ENCODE measurements at regions of chr16 and their contacts with region 1.

Region 1: GRCh38 chr16:76278980-76279379 is 1.8 kb downstream of the CNTNAP4 start:
- DNase-seq: peak; percentile 21
- H3K4me3 ChIP-seq: no peak overlapping the region; a peak in 1 of 4 replicates
- H3K27ac ChIP-seq: no peak overlapping the region; a peak in 1 of 4 replicates
- H3K4me1 ChIP-seq: no peaks in the 10 kb centered on the region; a peak in 2 of 4 replicates
- H3K27me3 ChIP-seq: no peaks in the 10 kb centered on the region
- CTCF ChIP-seq: peak; percentile 23; the same call in 1 of the 2 replicates
- EP300 ChIP-seq: no peak
- RAD21 ChIP-seq: peak; percentile 85

Region 2: DNA sequence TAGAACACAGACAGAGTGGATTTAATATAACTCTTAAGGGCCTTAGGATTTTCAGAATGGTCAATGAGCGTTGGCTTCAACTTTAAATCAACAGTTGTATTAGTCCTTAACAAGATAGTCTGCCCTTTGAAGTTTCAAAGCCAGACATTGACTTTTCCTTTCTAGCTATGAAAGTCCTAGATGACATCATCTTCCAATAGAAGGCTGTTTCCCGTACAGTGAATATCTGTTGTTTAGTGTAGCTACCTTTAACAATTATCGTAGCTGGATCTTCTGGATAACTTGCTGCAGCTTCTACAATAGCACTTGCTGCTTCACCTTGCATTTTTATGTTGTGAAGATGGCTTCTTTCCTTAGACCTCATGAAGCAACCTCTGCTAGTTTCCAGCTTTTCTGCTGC is 127.1 kb before region 1 on chr16:
- CTCF ChIA-PET with region 1: no interaction called
- POLR2A ChIA-PET with region 1: no interaction called
- DNase-seq: no peak
- H3K4me3 ChIP-seq: no peak overlapping the region
- H3K27ac ChIP-seq: no peak overlapping the region
- H3K4me1 ChIP-seq: no peaks in the 10 kb centered on the region
- H3K27me3 ChIP-seq: no peaks in the 10 kb centered on the region
- CTCF ChIP-seq: no peak
- EP300 ChIP-seq: no peak
- RAD21 ChIP-seq: no peak

Region 3: DNA sequence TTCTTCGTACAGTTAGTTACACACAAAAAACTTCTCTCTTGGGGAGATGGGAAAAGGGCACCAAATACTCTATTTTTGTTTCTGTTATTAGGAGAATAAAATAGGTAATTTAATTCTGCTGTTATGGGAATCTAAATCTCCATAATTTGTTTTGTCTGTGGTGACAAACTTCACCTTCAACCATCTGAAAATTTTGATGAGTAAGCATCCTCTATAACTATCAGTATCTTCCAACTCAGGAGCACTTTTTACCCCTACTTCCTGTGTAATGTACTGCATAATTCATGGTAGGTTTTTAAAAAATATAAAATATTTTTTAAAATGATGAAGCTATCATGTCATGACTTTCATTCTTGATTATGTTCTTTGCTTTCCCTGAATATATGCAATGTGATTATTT is 35.4 kb before region 1 on chr16:
- CTCF ChIA-PET with region 1: no interaction called
- POLR2A ChIA-PET with region 1: no interaction called
- DNase-seq: no peak
- H3K4me3 ChIP-seq: no peak overlapping the region
- H3K27ac ChIP-seq: no peak overlapping the region
- H3K4me1 ChIP-seq: no peaks in the 10 kb centered on the region
- H3K27me3 ChIP-seq: no peaks in the 10 kb centered on the region
- CTCF ChIP-seq: no peak
- EP300 ChIP-seq: no peak
- RAD21 ChIP-seq: no peak

Region 4: DNA sequence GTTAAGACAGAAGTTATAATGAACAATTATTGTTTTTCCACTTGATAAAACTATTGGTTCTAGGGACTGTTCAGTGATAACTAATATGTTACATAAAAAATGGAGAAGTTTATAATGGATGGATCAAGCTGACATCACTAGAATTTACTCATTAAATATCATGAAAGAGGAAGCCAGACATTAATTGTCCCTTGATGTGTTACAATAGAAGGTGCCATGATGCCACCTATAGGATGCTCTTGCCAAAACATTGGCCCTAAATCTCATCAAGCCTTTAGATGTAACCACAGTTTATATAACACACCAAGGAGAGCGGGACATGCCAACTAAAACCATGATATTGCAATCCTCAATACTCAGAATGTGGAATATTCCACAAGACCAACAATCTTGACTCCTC is 764.1 kb after region 1 on chr16:
- CTCF ChIA-PET with region 1: interaction called, 10 read pairs
- POLR2A ChIA-PET with region 1: no interaction called
- DNase-seq: peak; percentile 39
- H3K4me3 ChIP-seq: no peak overlapping the region
- H3K27ac ChIP-seq: no peak overlapping the region
- H3K4me1 ChIP-seq: no peaks in the 10 kb centered on the region; a peak in 1 of 4 replicates
- H3K27me3 ChIP-seq: no peaks in the 10 kb centered on the region
- CTCF ChIP-seq: peak; percentile 59
- EP300 ChIP-seq: no peak
- RAD21 ChIP-seq: peak; percentile 84

Measured in SK-N-SH (cell line).